ENCODE measurements at regions of chr6 and their contacts with region 1.

Region 1: DNA sequence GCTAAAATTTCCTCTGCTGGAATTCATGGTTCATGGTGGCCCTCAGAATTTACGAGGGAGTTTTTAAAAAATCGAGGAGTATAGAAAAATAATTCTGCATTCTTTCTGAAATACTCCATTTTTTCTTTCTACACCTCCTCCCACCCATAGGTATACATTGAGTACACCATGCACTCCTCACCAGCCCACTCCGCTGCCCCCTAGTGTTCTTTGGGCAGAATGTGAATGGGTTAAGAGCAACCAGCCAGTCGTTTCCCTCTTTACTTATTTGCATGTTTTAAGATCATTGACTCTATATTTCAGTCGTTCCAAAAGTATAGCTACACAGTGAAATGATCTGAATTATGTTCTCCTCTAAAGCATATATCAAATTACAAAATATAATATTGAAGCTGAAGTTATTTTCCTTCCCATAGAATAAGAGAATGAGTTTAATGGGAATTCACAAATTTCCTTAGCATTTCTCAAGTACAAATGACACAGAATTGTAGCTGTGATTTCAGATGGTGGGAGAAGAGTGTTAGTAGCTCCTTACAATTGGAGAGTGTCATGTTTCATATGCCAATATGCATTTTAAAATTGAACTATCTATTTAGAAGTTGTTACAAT is 977.7 kb upstream of the SLC35B3 start:
- DNase-seq: peak; percentile 41
- ATAC-seq: peak; percentile 95
- H3K4me3 ChIP-seq: no peak overlapping the region
- H3K27ac ChIP-seq: no peak overlapping the region
- H3K4me1 ChIP-seq: no peaks in the 10 kb centered on the region
- H3K27me3 ChIP-seq: no peaks in the 10 kb centered on the region
- CTCF ChIP-seq: peak; percentile 68
- EP300 ChIP-seq: no peak
- POLR2A ChIP-seq: no peak
- RAD21 ChIP-seq: no peak

Region 2: GRCh38 chr6:8131256-8131897 is 1281.7 kb before region 1 on chr6:
- CTCF ChIA-PET with region 1: interaction called, 3 read pairs
- POLR2A ChIA-PET with region 1: no interaction called
- in situ Hi-C with region 1: no loop called
- intact Hi-C with region 1: loop called (anchors 2 kb)
- DNase-seq: peak; percentile 77
- ATAC-seq: peak; percentile 97
- H3K4me3 ChIP-seq: no peak overlapping the region
- H3K27ac ChIP-seq: no peak overlapping the region
- H3K4me1 ChIP-seq: peaks cover 4% of the 10 kb centered on the region
- H3K27me3 ChIP-seq: peaks cover 0 to 4% of the 10 kb centered on the region in 2 experiments; a peak in 1 of 5 replicates
- CTCF ChIP-seq: peak; percentile 90
- EP300 ChIP-seq: no peak
- POLR2A ChIP-seq: no peak
- RAD21 ChIP-seq: peak; percentile 92

Region 3: GRCh38 chr6:8506123-8506522 is 906.9 kb before region 1 on chr6:
- CTCF ChIA-PET with region 1: no interaction called
- POLR2A ChIA-PET with region 1: no interaction called
- in situ Hi-C with region 1: loop called (anchors 25 kb)
- intact Hi-C with region 1: no loop called
- DNase-seq: no peak
- ATAC-seq: no peak
- H3K4me3 ChIP-seq: no peak overlapping the region
- H3K27ac ChIP-seq: no peak overlapping the region
- H3K4me1 ChIP-seq: no peaks in the 10 kb centered on the region
- H3K27me3 ChIP-seq: no peaks in the 10 kb centered on the region
- CTCF ChIP-seq: no peak
- EP300 ChIP-seq: no peak
- POLR2A ChIP-seq: no peak
- RAD21 ChIP-seq: no peak

Region 4: GRCh38 chr6:8983188-8983688 is 429.8 kb before region 1 on chr6:
- CTCF ChIA-PET with region 1: interaction called, 8 read pairs
- POLR2A ChIA-PET with region 1: no interaction called
- in situ Hi-C with region 1: loop called (anchors 25 kb)
- intact Hi-C with region 1: loop called (anchors 1 kb)
- DNase-seq: peak; percentile 45
- ATAC-seq: peak; percentile 99
- H3K4me3 ChIP-seq: no peak overlapping the region
- H3K27ac ChIP-seq: no peak overlapping the region
- H3K4me1 ChIP-seq: no peaks in the 10 kb centered on the region
- H3K27me3 ChIP-seq: no peaks in the 10 kb centered on the region
- CTCF ChIP-seq: peak; percentile 93
- EP300 ChIP-seq: no peak
- POLR2A ChIP-seq: no peak
- RAD21 ChIP-seq: peak; percentile 75

Region 5: DNA sequence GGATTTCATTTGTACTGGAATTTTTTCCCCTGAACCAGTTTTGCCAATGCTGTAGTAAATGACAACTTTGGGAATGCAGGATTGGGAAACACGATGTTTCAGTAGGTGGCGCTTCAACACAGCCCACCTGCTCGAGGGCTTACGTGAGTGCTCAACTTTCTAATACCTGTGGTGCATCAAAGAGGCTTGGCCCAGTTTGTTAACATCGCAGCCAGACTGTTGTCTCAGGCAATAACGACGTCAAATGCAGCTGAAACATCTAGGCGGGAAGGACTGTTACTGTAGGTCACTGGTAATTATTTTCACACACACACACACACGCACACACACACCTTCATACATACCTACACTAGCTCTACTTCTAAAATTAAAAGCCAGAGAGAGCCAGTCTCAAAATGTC is 162.2 kb before region 1 on chr6:
- CTCF ChIA-PET with region 1: interaction called, 7 read pairs
- POLR2A ChIA-PET with region 1: no interaction called
- in situ Hi-C with region 1: no loop called
- intact Hi-C with region 1: loop called (anchors 1 kb)
- DNase-seq: peak; percentile 16
- ATAC-seq: peak; percentile 82
- H3K4me3 ChIP-seq: no peak overlapping the region
- H3K27ac ChIP-seq: no peak overlapping the region
- H3K4me1 ChIP-seq: no peaks in the 10 kb centered on the region
- H3K27me3 ChIP-seq: no peaks in the 10 kb centered on the region; a peak in 1 of 5 replicates
- CTCF ChIP-seq: peak; percentile 82
- EP300 ChIP-seq: no peak
- POLR2A ChIP-seq: no peak
- RAD21 ChIP-seq: no peak

Measured in HepG2 (cell line).